KBM-7 (cell line): ENCODE measurements at regions of chr14 and their contacts with region 1.

Region 1: DNA sequence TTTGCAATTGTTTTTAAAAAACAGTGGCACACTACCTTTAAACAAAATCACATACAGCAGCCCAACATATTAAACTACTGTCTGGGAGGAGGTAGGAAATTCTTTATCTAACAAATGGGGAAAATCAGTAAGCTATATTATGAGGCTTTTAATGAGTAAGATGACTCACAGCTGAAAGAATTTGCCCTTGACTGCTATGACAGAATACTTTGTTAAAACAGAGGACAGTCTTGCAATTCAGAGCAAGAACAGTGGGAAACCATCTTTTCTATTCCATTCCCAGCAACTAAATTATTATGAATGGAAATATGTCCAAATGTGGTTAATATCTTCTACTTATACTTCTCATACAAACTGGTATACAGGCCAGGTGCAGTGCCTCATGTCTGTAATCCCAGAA is 49.2 kb upstream of the SGPP1 start:
- DNase-seq: no peak

Region 2: GRCh38 chr14:64294672-64295413 is 517.8 kb after region 1 on chr14:
- in situ Hi-C with region 1: loop called (anchors 25 kb)
- DNase-seq: peak; percentile 64